AG04449 (cell line): ENCODE measurements at regions of chr9 and their contacts with region 1.

Region 1: GRCh38 chr9:4762108-4762885 is 21.3 kb upstream of the AK3 start:
- DNase-seq: no peak
- H3K4me3 ChIP-seq: no peak overlapping the region
- CTCF ChIP-seq: peak; percentile 72

Region 2: DNA sequence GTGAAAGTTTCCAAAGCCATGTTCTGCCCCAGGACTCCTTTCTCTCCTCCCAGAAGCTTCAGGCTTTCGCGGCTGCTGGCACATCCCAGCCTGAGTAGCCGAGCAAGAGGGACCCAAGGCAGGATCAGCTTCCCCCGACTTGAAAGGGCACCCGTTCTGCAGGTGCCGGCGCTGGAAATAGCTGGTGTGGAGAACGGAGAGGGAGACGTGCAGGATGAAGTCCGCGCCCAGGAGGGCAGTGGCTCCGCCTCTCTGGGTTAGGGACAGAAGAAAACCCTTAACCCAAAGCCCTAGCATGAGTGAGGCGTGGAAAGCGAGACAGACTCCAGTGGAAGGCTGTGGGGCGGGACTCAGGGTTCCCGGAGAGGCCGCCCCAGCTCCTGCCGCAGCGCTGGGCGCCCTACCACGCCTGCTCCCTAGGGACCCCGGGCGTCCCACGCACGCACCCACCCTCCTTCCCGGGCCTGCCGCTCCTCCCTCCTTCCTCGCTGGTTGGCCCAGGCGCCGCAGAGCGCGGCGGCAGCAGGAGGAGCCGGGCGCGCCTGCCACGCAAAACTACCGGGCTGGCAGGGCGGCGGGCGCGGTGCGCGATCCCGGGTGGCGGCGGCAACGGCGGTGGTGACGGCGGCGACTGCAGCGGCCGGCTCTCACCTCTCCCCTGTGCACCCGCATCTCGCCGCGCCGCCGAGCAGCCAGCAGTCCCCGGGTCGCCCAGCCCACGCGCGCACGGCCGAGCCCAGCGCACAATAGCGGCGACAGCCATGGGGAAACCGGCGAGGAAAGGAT is 272.2 kb before region 1 on chr9 and contains the start of gene SLC1A1:
- CTCF ChIA-PET with region 1: no interaction called
- POLR2A ChIA-PET with region 1: no interaction called
- DNase-seq: no peak
- H3K4me3 ChIP-seq: peak within 1 kb of the TSS; percentile 76
- CTCF ChIP-seq: no peak

Region 3: GRCh38 chr9:4774209-4774608 is 11.9 kb after region 1 on chr9:
- CTCF ChIA-PET with region 1: interaction called, 13 read pairs
- POLR2A ChIA-PET with region 1: no interaction called
- DNase-seq: no peak
- H3K4me3 ChIP-seq: no peak overlapping the region
- CTCF ChIP-seq: no peak

Region 4: DNA sequence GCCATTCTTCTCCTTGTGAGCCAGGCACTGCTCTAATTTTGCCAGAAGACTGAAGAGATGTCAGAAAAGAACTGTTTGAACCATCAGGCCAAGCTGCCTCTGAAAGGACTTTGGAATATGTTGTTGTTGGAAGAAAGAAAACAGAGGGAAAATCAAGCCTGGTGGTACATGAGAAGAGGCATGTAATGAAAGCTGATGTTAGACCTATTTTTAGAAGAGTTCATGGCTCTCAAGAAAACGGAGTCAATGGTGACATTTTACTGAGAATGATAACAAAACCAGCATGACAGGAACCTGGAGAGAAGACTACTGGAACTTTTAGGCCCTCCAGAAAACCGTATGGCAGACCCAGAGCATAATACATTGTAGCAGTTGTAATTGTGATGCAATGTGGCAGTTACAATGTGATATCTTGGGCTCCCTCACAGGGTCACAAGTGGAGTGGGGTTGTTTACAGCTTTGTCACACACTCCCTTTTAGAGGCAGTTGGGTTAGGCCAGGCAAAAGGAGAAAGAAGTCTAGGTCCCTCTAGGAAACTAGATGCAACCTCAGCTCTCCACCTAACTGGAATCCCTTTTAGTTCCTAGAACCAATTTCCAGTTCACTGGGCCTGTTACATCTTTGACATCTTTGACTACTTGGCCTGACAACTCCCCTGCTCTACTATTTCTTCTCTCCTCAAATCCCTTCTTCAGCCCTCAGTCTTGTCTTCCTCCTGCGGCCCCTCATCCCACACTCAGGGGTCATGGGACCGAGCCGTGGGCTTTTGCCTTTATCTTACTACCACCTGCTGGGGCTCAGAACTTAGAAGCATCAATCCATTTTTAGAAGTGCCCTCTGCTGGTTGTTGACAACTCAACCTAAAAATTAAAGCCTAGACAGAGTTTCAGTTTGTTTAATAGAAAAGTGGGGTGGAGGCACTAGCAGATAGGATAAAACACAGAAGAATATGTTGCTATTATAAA is 161.6 kb after region 1 on chr9:
- CTCF ChIA-PET with region 1: interaction called, 51 read pairs
- POLR2A ChIA-PET with region 1: no interaction called
- DNase-seq: no peak
- H3K4me3 ChIP-seq: no peak overlapping the region
- CTCF ChIP-seq: peak; percentile 12

Region 5: DNA sequence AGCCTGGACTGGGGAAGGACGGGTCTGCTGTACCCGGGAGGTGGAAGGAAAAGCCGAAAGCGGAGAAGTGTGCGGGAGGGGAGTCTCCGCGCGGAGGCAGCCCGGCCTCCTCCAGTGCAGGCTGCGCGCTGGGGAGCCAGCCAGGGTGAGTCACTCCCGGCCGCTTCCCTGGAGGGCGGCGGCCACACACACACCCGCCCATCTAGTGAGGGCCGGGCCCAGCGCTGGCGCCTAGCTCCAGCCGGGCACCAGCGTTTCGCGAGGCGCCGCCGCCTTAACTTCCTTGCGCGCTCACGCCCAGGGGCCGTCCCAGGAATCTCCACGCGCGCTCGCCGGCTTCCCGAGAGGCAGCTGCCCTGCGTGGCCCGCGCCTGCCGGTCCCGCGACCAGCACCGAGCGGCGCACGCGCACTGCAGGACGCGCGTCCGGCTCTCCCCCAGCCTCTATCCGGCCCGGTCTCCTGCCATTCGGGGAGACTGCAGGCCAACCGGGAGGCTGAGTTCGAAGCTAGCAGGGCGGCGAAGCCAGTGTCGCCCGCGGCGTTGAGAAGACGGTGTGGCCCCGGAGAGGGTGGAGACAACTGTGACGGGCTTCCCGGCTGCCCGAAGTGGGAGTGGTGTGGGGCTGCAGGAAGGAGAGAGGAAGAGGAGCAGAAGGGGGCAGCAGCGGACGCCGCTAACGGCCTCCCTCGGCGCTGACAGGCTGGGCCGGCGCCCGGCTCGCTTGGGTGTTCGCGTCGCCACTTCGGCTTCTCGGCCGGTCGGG is 222.5 kb after region 1 on chr9 and contains the start of gene JAK2:
- CTCF ChIA-PET with region 1: interaction called, 160 read pairs
- POLR2A ChIA-PET with region 1: no interaction called
- DNase-seq: peak; percentile 54
- H3K4me3 ChIP-seq: peak within 1 kb of the TSS; percentile 80
- CTCF ChIP-seq: peak; percentile 78

Region 6: DNA sequence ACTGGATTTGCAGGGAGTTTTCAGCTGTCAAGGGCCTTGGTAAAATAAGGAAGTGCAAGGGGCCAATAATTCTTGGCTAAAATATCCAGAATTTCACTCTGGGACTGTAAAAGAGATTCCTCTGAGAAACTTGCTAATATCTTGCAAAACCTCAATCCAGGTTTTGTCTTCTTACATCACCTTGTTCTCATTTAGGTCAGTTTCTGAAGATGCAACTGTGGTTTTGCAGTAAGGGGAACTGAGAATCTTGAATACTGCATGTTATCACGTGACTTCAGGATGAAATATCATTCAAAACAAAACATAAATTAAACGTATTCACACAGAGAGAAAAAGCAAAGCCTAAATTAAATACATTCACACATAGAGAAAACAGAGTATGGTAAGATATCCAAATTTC is 831.6 kb after region 1 on chr9:
- CTCF ChIA-PET with region 1: interaction called, 16 read pairs
- POLR2A ChIA-PET with region 1: no interaction called
- DNase-seq: no peak
- H3K4me3 ChIP-seq: no peak overlapping the region
- CTCF ChIP-seq: no peak